ENCODE measurements at regions of chr7 and their contacts with region 1.

Region 1: GRCh38 chr7:139645572-139646523 is 122.4 kb downstream of the CLEC2L start:
- DNase-seq: peak; percentile 57
- H3K4me3 ChIP-seq: no peak overlapping the region
- H3K27ac ChIP-seq: no peak overlapping the region
- H3K4me1 ChIP-seq: peaks cover 5% of the 10 kb centered on the region
- H3K27me3 ChIP-seq: no peaks in the 10 kb centered on the region
- CTCF ChIP-seq: peak; percentile 85 to 94

Region 2: DNA sequence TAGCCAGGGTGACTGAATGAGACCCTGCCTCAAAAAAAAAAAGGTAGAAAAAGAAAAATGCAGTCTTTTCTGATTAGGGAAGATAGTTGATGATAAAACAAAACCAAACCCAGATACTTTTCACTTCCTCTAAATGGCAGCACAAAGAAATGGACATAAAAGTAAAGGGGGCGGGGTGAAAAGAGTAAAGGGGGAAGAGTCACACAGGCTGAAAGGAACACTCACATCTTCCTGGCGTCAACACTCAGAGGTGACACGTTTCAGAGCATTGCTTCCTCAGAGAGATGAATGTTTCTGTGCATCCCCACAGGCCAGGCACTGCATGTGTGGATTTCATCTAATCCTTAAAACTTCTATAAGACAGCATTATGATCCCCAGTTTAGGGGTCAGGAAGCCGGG is 50.7 kb after region 1 on chr7:
- CTCF ChIA-PET with region 1: no interaction called
- dilution Hi-C with region 1: no loop called
- in situ Hi-C with region 1: no loop called
- intact Hi-C with region 1: loop called (anchors 5 kb)
- DNase-seq: no peak
- H3K4me3 ChIP-seq: no peak overlapping the region
- H3K27ac ChIP-seq: no peak overlapping the region
- H3K4me1 ChIP-seq: no peaks in the 10 kb centered on the region
- H3K27me3 ChIP-seq: no peaks in the 10 kb centered on the region
- CTCF ChIP-seq: no peak

Region 3: GRCh38 chr7:139777948-139778841 is 132.3 kb after region 1 on chr7 and contains the start of gene HIPK2:
- CTCF ChIA-PET with region 1: no interaction called
- dilution Hi-C with region 1: no loop called
- in situ Hi-C with region 1: no loop called
- intact Hi-C with region 1: loop called (anchors 1 kb)
- DNase-seq: peak; percentile 55
- H3K4me3 ChIP-seq: peak within 1 kb of the TSS; percentile 67 to 75 (median 71)
- H3K27ac ChIP-seq: peak within 1 kb of the TSS; percentile 78
- H3K4me1 ChIP-seq: peaks cover 33% of the 10 kb centered on the region
- H3K27me3 ChIP-seq: no peaks in the 10 kb centered on the region
- CTCF ChIP-seq: no peak
- total RNA-seq, gene HIPK2: 31.0 to 58.3 TPM

Region 4: GRCh38 chr7:139842401-139843210 is 196.8 kb after region 1 on chr7:
- CTCF ChIA-PET with region 1: no interaction called
- dilution Hi-C with region 1: no loop called
- in situ Hi-C with region 1: no loop called
- intact Hi-C with region 1: loop called (anchors 5 kb)
- DNase-seq: no peak
- H3K4me3 ChIP-seq: no peak overlapping the region
- H3K27ac ChIP-seq: no peak overlapping the region
- H3K4me1 ChIP-seq: no peaks in the 10 kb centered on the region
- H3K27me3 ChIP-seq: no peaks in the 10 kb centered on the region
- CTCF ChIP-seq: no peak

Region 5: GRCh38 chr7:139995017-139995931 is 349.4 kb after region 1 on chr7:
- CTCF ChIA-PET with region 1: no interaction called
- dilution Hi-C with region 1: loop called (anchors 5 kb)
- in situ Hi-C with region 1: loop called (anchors 5 to 10 kb)
- intact Hi-C with region 1: no loop called
- DNase-seq: no peak
- H3K4me3 ChIP-seq: no peak overlapping the region
- H3K27ac ChIP-seq: no peak overlapping the region
- H3K4me1 ChIP-seq: no peaks in the 10 kb centered on the region
- H3K27me3 ChIP-seq: no peaks in the 10 kb centered on the region
- CTCF ChIP-seq: peak in 1 of 2 donors; percentile 21

Measured in mammary epithelial cell (primary cell).